AG04450 (cell line): ENCODE measurements at regions of chr19 and their contacts with region 1.

Region 1: GRCh38 chr19:10259162-10259905 is 7.3 kb downstream of the MRPL4 start:
- DNase-seq: peak; percentile 53
- H3K4me3 ChIP-seq: no peak overlapping the region
- H3K27ac ChIP-seq: no peak overlapping the region
- H3K27me3 ChIP-seq: no peaks in the 10 kb centered on the region
- CTCF ChIP-seq: peak; percentile 77

Region 2: DNA sequence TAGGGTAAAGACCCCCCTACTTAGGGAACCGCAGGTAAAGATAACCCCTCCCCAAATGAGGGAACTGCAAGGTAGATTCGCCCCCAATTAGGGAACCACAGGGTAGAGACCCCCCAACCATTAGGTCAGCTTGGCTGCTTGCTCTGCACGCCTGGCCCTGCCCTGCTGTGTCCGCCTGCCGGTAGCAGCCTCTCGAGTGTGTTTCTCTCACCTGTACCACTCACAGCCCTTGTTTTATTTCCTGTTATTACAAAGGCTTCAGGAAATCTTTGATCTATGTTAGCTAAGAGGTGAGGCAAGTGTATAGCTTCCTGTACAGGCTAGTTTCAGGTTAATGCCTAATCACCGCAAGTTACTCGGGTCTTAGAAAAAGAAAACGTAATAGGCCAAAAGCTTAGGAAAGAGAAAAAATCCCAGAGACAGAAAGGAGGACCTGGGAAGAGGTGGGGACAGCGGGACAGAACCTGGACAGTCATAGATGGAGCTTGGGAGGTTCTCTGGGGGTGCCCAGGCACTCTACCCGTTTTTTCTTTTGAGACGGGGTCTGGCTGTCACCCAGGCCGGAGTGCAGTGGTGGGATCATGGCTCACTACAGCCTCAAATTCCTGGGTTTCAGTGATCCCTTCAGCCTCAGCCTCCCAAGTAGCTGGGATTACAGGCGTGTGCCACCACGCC is 116.5 kb before region 1 on chr19:
- CTCF ChIA-PET with region 1: no interaction called
- POLR2A ChIA-PET with region 1: no interaction called
- DNase-seq: no peak
- H3K4me3 ChIP-seq: no peak overlapping the region
- H3K27ac ChIP-seq: no peak overlapping the region
- H3K27me3 ChIP-seq: no peaks in the 10 kb centered on the region
- CTCF ChIP-seq: no peak

Region 3: GRCh38 chr19:10209315-10209714 is 50.0 kb before region 1 on chr19:
- CTCF ChIA-PET with region 1: no interaction called
- POLR2A ChIA-PET with region 1: no interaction called
- DNase-seq: no peak
- H3K4me3 ChIP-seq: no peak overlapping the region
- H3K27ac ChIP-seq: no peak overlapping the region
- H3K27me3 ChIP-seq: no peaks in the 10 kb centered on the region
- CTCF ChIP-seq: no peak

Region 4: GRCh38 chr19:10222201-10222890 is 37.0 kb before region 1 on chr19:
- CTCF ChIA-PET with region 1: no interaction called
- POLR2A ChIA-PET with region 1: no interaction called
- DNase-seq: no peak
- H3K4me3 ChIP-seq: no peak overlapping the region
- H3K27ac ChIP-seq: no peak overlapping the region
- H3K27me3 ChIP-seq: no peaks in the 10 kb centered on the region
- CTCF ChIP-seq: no peak

Region 5: DNA sequence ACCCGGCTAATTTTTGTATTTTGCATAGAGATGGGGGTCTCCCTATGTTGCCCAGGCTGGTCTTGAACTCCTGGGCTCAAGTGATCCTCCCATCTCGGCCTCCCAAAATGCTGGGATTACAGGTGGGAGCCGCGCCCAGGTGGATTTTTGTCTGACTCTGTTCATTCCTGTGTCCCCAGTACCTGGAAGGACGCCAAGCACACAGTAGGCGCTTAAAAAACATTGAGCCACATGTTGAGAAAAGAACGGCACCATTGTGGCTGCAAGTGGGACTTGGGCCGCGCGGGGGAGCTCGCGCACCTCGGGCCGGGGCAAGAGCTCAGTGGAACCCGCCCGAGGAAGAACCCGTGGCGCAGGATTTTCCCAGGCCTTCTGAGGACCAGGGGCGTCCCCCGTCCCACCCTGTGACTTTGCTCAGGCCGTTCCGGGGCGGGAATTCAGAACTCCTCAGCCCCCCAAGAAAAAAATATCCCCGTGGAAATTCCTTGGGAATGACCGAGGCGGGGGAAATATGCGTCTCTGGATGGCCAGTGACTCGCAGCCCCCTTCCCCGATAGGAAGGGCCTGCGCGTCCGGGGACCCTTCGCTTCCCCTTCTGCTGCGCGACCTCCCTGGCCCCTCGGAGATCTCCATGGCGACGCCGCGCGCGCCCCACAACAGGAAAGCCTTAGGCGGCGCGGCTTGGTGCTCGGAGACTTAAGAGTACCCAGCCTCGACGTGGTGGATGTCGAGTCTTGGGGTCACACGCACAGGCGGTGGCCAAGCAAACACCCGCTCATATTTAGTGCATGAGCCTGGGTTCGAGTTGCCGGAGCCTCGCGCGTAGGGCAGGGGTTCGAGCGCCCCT is 10.2 kb after region 1 on chr19:
- CTCF ChIA-PET with region 1: interaction called, 30 read pairs
- POLR2A ChIA-PET with region 1: interaction called, 4 read pairs
- DNase-seq: no peak
- H3K4me3 ChIP-seq: no peak overlapping the region
- H3K27ac ChIP-seq: no peak overlapping the region
- H3K27me3 ChIP-seq: no peaks in the 10 kb centered on the region
- CTCF ChIP-seq: peak; percentile 95

Region 6: GRCh38 chr19:10353793-10354391 is 94.6 kb after region 1 on chr19:
- CTCF ChIA-PET with region 1: no interaction called
- POLR2A ChIA-PET with region 1: no interaction called
- DNase-seq: no peak
- H3K4me3 ChIP-seq: no peak overlapping the region
- H3K27ac ChIP-seq: no peak overlapping the region
- H3K27me3 ChIP-seq: no peaks in the 10 kb centered on the region
- CTCF ChIP-seq: no peak

Region 7: DNA sequence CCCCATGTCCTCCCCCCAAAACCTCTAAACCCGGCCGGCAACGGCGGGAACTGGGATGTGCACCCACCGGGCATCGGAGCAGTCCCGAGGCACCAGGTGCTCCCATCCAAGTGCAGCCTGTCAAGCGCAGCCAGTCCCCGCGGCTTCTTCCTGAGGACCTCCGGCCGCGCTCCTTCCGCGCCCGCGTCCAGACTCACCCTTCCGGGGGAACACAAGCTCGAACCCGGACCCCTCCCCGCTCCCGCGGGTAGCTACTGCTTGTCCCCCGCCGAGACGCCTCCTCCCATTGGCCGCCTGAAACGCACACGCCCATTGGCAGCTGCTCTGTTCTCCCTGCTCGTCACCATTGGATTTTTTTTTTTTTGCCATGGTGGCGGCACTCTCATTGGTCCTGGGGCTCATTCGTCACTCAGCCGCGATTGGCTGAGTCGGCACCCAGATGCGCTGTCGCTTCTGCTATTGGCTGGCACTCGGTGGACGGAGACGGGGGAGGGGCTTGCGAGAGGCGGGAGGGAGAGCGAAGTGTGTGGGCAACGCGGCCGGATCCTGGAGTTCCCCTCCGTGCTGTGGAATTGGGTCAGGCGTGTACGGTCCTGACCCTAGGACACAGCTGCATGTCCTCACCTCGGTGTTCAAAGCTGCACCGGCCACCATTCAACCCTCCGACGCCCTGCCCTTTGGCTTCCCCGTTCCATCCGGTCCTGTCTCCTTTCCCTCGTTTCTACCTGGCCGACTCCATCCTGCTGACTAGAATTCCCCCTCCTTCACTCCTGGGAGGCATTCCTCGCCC is 121.2 kb after region 1 on chr19 and contains the start of gene TYK2:
- CTCF ChIA-PET with region 1: interaction called, 18 read pairs
- POLR2A ChIA-PET with region 1: interaction called, 5 read pairs
- DNase-seq: peak; percentile 97
- H3K4me3 ChIP-seq: peak within 1 kb of the TSS; percentile 95
- H3K27ac ChIP-seq: peak within 1 kb of the TSS; percentile 57
- H3K27me3 ChIP-seq: no peaks in the 10 kb centered on the region
- CTCF ChIP-seq: no peak
- polyA plus RNA-seq, gene TYK2: 29.1 and 52.8 TPM in 2 replicates

Region 8: GRCh38 chr19:10388957-10389356 is 129.6 kb after region 1 on chr19:
- CTCF ChIA-PET with region 1: interaction called, 188 read pairs
- POLR2A ChIA-PET with region 1: interaction called, 18 read pairs
- DNase-seq: peak; percentile 50
- H3K4me3 ChIP-seq: no peak overlapping the region
- H3K27ac ChIP-seq: peak overlapping the region; percentile 11
- H3K27me3 ChIP-seq: no peaks in the 10 kb centered on the region
- CTCF ChIP-seq: peak; percentile 96

Region 9: DNA sequence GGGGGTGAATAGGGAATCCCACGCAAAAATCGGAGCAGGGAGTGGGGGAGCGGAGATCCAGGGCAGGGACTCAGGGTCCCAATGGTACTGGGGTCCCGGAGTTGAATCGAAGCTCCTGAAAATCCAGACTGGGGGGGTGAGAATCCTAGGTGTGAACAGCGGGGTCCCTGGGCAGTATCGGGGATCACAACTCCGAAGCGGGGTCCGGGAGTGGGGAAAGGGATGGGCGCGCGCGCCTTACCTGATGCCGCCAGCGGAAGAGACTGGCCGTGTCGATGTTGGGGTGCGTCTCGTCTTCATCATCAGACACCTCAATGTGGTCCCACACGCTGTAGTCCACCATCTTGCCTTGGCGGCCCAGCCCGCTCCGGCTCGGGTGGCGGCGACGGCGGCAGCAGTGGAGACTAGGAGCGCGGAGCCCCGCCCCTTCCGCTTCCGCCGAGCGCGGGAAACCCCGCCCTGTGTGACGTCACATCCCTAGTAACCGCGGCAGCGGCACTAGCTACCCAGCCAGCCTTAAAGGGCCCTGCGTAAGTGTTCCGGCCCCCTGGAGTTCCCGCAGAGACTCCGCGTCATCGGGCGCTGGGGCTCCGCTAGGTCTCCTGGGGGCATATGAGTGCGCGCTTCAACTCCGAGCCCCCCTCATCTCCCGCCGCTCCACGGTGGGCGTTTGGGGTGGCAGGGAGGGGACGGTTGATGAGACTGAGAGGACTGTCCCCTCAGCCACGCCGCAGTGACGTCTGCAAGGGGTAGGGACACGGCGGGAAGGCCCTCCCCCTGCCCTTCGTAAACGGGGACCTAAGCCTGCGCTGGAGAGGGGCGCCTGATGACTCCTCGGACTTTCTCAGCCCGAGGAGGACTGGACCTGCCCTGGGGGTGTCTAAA is 144.0 kb after region 1 on chr19 and contains the start of gene CDC37:
- CTCF ChIA-PET with region 1: interaction called, 10 read pairs
- POLR2A ChIA-PET with region 1: interaction called, 4 read pairs
- DNase-seq: peak; percentile 91
- H3K4me3 ChIP-seq: peak within 1 kb of the TSS; percentile 99
- H3K27ac ChIP-seq: peak within 1 kb of the TSS; percentile 81
- H3K27me3 ChIP-seq: no peaks in the 10 kb centered on the region
- CTCF ChIP-seq: no peak
- polyA plus RNA-seq, gene CDC37: 268 and 340 TPM in 2 replicates

Region 10: GRCh38 chr19:10543420-10544241 is 284.3 kb after region 1 on chr19 and contains the start of gene ATG4D:
- CTCF ChIA-PET with region 1: no interaction called
- POLR2A ChIA-PET with region 1: interaction called, 10 read pairs
- DNase-seq: no peak
- H3K4me3 ChIP-seq: peak within 1 kb of the TSS; percentile 80
- H3K27ac ChIP-seq: no peak within 1 kb of the TSS
- H3K27me3 ChIP-seq: no peaks in the 10 kb centered on the region
- CTCF ChIP-seq: no peak
- polyA plus RNA-seq, gene ATG4D: 4.6 and 8.7 TPM in 2 replicates